ENCODE measurements at regions of chr7 and their contacts with region 1.

Region 1: DNA sequence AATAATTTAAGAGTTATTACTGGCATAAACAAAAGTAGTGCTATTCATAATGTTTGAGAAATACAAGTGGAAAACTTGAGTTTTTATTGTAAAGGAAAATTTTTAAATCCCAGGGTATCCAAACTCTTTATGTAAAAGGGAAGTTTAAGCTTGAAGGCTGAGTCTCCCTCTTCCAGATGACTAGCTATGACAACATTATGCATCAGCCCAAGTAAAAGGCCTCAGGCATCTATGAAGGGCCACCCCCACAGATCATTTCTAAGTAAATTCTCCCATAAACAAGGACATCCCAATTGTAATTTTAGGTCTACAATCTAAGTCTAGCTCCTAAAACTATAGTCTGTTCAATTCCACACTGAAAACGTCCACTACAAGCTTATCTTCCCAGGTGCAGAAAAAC is 166.2 kb upstream of the STEAP1 start:
- DNase-seq: no peak

Region 2: GRCh38 chr7:89966067-89966665 is 21.9 kb before region 1 on chr7:
- intact Hi-C with region 1: loop called in 1 of 2 experiments (anchors 2 kb)
- DNase-seq: no peak

Measured in posterior vena cava (tissue), 2 donors.